A549 (cell line): ENCODE measurements at regions of chr7 and their contacts with region 1.

Region 1: DNA sequence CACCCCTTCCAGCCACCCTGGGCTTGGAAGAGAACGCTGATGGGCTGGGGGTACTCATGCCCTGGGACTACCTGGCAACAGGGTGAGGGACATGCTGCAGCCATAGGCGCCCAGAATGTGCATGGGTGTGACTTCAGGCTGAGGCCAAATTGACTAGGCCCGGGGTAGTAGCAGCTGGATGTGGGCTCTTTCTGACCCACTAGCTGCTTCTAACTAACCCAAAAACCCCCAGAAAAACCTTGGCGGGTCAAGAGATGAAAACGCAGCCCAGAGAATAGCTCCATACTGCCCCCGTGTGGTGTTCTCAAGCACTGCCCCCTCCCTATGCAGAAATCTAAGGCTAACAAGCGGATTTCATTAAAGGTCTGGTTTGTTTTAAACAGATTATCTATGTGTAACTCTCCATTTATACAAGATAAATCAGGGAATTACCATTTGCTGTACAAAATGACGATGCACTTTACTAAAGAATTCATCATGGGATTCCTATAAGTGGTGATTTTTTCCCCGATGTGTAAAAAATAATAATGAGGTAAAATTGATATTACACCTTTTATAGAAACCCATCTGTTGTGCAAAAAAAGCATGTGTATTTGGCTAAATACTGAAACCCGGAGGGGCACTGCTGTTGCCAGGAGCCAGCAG is 4.2 kb downstream of the SMARCD3 start:
- DNase-seq: peak; percentile 42 to 73
- ATAC-seq: no peak
- H3K4me3 ChIP-seq: no peak overlapping the region
- H3K27ac ChIP-seq: no peak overlapping the region
- H3K4me1 ChIP-seq: peaks cover 53% of the 10 kb centered on the region
- CTCF ChIP-seq: peak; percentile 82
- EP300 ChIP-seq: no peak
- POLR2A ChIP-seq: no peak
- RAD21 ChIP-seq: peak; percentile 48 to 54

Region 2: GRCh38 chr7:151226875-151227782 is 17.2 kb before region 1 on chr7 and contains the start of gene ABCF2:
- CTCF ChIA-PET with region 1: interaction called, 69 read pairs
- POLR2A ChIA-PET with region 1: interaction called, 9 read pairs
- DNase-seq: peak; percentile 99
- ATAC-seq: peak; percentile 99 to 100
- H3K4me3 ChIP-seq: peak within 1 kb of the TSS; percentile 93
- H3K27ac ChIP-seq: peak within 1 kb of the TSS; percentile 85 to 88
- H3K4me1 ChIP-seq: peaks cover 25% of the 10 kb centered on the region
- CTCF ChIP-seq: no peak
- EP300 ChIP-seq: no peak
- POLR2A ChIP-seq: peak; percentile 66
- RAD21 ChIP-seq: no peak
- polyA plus RNA-seq, gene ABCF2: 47.8 and 53.8 TPM in 2 replicates

Region 3: DNA sequence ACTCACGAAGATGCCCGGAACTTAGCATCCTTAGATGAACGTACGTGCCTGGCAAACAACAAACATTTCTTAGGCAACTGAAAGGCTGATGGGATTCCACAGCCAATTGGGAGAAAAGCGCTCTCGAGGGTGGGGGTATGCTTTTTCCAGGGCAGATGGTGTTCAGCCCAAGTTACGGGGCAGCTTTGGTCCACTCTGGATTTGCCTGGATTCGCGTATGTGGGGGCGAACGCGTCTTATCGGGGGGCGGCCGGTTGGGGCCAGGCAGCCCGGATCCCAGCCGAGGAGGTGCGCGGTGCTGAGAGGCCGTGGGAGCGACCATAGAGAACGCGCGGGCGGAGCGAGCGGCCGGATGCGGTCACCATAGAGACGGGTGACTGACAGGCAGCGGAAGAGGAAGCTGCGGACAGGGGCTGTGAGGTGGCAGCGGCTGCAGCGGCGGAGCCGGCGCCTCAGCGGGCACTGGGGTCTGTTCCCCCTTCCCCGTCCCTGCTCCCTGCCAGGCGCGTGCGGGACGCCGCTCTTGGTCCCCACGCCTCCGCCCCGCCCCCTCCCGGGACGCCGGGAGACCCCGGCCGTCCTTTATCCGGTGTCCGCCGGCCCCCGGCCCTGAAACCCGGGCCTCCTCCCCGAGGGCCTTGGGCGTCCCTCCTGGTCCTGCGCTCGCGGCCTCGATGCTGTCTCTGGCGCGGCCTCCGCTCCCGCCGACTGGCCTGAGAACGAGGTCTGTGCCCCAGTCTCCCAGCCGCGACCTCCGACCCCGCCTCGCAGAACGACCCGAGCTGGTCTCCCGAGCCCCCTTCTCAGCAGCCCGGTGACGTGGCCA is 12.0 kb before region 1 on chr7 and contains the start of gene CHPF2:
- CTCF ChIA-PET with region 1: interaction called, 69 read pairs
- POLR2A ChIA-PET with region 1: interaction called, 9 read pairs
- DNase-seq: peak; percentile 83 to 98
- ATAC-seq: peak; percentile 96 to 99
- H3K4me3 ChIP-seq: peak within 1 kb of the TSS; percentile 78
- H3K27ac ChIP-seq: peak within 1 kb of the TSS; percentile 86 to 96
- H3K4me1 ChIP-seq: peaks cover 26% of the 10 kb centered on the region
- CTCF ChIP-seq: no peak
- EP300 ChIP-seq: no peak
- POLR2A ChIP-seq: peak; percentile 85
- RAD21 ChIP-seq: no peak
- polyA plus RNA-seq, gene CHPF2: 14.9 and 17.2 TPM in 2 replicates

Region 4: GRCh38 chr7:151261529-151261928 is 17.2 kb after region 1 on chr7:
- CTCF ChIA-PET with region 1: interaction called, 60 read pairs
- POLR2A ChIA-PET with region 1: no interaction called
- DNase-seq: no peak
- ATAC-seq: peak in 1 of 2 experiments; percentile 25; a peak in 1 of 6 replicates
- H3K4me3 ChIP-seq: no peak overlapping the region
- H3K27ac ChIP-seq: no peak overlapping the region
- H3K4me1 ChIP-seq: no peaks in the 10 kb centered on the region
- CTCF ChIP-seq: no peak
- EP300 ChIP-seq: no peak
- POLR2A ChIP-seq: no peak
- RAD21 ChIP-seq: no peak

Region 5: DNA sequence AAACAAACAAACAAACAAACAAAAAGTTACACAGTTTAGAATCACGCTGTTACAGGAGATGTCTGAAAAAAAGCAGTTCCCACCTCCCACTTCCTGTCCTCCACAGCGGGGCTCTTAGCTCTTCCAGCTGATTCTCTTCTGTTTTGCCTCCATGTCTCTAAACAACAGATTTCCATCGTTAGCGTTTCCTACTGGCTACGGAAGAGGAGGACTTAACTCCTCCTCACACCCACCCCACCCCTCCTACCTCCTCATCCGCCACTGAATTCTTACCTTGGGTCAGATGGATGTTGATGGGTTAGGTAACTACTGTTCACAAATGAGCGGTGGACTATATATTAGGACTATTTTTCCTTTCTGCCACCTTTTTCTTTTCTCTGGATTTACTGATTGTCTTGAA is 60.5 kb after region 1 on chr7:
- CTCF ChIA-PET with region 1: interaction called, 21 read pairs
- POLR2A ChIA-PET with region 1: no interaction called
- DNase-seq: no peak
- ATAC-seq: no peak
- H3K4me3 ChIP-seq: no peak overlapping the region
- H3K27ac ChIP-seq: no peak overlapping the region
- H3K4me1 ChIP-seq: no peaks in the 10 kb centered on the region
- CTCF ChIP-seq: no peak
- EP300 ChIP-seq: no peak
- POLR2A ChIP-seq: no peak
- RAD21 ChIP-seq: no peak